ENCODE measurements at regions of chr19 and their contacts with region 1.

Region 1: DNA sequence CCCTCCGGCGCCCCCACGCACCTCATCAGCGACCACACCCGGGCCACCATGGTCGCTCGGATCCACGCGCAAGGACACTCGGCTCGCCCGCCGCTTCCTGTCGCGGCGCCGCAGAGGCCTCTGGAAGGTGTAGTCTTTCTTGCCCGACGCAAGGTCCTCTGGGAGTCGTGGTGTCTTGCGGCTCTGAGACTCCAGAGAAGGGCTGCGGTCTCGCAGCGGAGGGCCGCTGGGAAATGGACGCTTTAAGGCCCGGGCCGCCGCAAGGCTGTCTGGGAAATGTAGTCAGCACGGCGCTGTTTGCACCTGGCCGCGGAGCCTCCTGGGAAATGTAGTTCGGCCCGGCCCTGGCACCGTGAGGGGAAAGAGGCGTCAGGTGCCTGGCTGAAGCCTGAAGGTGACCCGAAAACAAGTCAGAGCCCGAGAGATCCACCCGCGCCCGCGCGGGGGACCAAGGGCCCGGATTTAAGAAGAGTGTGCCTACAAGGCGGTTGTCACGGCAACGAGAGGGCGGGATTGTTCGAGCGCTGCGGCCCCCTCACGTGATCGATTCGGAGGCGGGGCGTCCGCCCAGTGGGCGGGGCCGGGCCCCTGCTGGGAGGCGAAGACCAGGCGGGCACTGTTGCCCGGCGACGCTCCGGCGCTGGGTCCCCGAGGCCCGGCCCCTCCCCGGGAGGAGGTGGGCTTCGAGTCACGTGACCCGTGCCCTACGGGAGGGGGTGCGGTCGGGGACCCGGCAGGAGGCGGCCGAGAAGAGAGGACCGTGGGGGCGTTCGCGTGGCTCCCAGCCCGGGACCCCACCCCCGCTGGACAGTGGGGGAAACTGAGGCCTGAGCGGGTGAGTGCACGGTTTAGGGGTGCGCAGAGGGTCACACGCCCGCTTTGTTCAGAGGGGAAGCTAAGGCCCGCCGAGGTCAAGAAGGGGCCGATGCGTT is at the starts of genes HSD11B1L and MICOS13:
- DNase-seq: peak; percentile 99
- ATAC-seq: peak; percentile 96
- H3K4me3 Mint-ChIP-seq: peak within 1 kb of the TSS; percentile 96
- H3K27ac Mint-ChIP-seq: peak within 1 kb of the TSS; percentile 98
- H3K4me1 Mint-ChIP-seq: peaks cover 26% of the 10 kb centered on the region
- H3K27me3 Mint-ChIP-seq: peaks cover 12% of the 10 kb centered on the region
- total RNA-seq, gene HSD11B1L: 2.0 to 2.1 TPM
- total RNA-seq, gene MICOS13: 53.1 to 55.1 TPM

Region 2: DNA sequence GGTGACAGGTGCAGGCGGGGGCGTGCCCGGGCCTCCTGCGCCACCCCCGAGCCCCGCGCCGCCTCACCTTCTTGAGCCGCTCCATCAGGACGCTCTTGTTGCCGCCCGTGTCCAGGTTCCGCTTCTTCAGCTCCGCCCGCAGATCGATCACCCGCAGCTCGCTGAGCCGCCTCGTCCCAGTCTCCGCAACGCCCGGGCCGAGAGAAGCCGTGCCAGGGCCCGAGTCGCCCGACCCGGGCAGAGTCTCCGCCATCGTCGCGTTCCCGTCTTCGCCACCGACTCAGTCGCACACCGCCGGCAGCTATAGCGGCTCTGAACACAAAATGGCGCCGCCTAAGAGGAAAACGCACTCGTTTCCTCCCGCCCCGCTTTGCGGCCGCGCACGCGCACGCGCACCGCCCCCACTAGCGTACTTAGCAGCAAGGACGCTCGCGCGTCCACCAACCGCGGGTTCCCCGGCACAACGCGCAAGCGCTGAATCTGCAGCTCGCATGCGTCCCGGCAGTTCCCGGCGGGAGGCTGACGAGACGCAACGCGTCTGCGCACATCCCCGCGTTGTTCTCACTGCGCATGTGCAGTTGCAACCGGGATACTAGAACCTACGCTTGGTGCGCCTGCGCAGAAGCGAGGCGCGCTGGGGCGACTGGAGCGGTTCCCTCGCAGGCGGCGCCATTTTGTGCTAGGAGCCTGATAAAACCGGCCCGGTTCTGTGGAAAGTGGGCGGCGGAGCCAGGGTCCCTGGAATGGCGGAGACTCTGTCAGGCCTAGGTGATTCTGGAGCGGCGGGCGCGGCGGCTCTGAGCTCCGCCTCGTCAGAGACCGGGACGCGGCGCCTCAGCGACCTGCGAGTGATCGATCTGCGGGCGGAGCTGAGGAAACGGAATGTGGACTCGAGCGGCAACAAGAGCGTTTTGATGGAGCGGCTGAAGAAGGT is 58.0 kb before region 1 on chr19 and contains the starts of genes SAFB and SAFB2:
- CTCF ChIA-PET with region 1: interaction called, 63 read pairs
- POLR2A ChIA-PET with region 1: interaction called, 19 read pairs
- DNase-seq: peak; percentile 100
- ATAC-seq: peak; percentile 92
- H3K4me3 Mint-ChIP-seq: peak within 1 kb of the TSS; percentile 100
- H3K27ac Mint-ChIP-seq: peak within 1 kb of the TSS; percentile 99
- H3K4me1 Mint-ChIP-seq: peaks cover 71% of the 10 kb centered on the region
- H3K27me3 Mint-ChIP-seq: no peaks in the 10 kb centered on the region
- total RNA-seq, gene SAFB: 116 to 134 TPM
- total RNA-seq, gene SAFB2: 84.2 to 96.6 TPM

Measured in activated CD8-positive, alpha-beta T cell treated with anti-CD3 and anti-CD28 coated beads, Interleukin-2, amount 10 ng/mL, durations not matched to agents 7 days and 5 days (primary cell).